PC-9 (cell line): ENCODE measurements at regions of chr12 and their contacts with region 1.

Region 1: GRCh38 chr12:75722714-75723200 is 211.3 kb upstream of the KRR1 start:
- DNase-seq: peak in 1 of 2 experiments; percentile 24
- H3K4me3 ChIP-seq: no peak overlapping the region
- H3K27ac ChIP-seq: no peak overlapping the region
- H3K4me1 ChIP-seq: peaks cover 13% of the 10 kb centered on the region
- H3K27me3 ChIP-seq: no peaks in the 10 kb centered on the region
- CTCF ChIP-seq: no peak

Region 2: GRCh38 chr12:75526655-75527511 is 195.9 kb before region 1 on chr12:
- CTCF ChIA-PET with region 1: no interaction called
- POLR2A ChIA-PET with region 1: no interaction called
- intact Hi-C with region 1: loop called (anchors 5 kb)
- DNase-seq: peak; percentile 3 to 40
- H3K4me3 ChIP-seq: no peak overlapping the region
- H3K27ac ChIP-seq: no peak overlapping the region
- H3K4me1 ChIP-seq: no peaks in the 10 kb centered on the region; the same call in 1 of the 2 replicates
- H3K27me3 ChIP-seq: no peaks in the 10 kb centered on the region
- CTCF ChIP-seq: peak; percentile 82

Region 3: GRCh38 chr12:75712252-75712651 is 10.5 kb before region 1 on chr12:
- CTCF ChIA-PET with region 1: no interaction called
- POLR2A ChIA-PET with region 1: no interaction called
- intact Hi-C with region 1: loop called (anchors 1 kb)
- DNase-seq: peak in 1 of 2 experiments; percentile 79
- H3K4me3 ChIP-seq: no peak overlapping the region
- H3K27ac ChIP-seq: peak overlapping the region; percentile 63
- H3K4me1 ChIP-seq: peaks cover 39% of the 10 kb centered on the region
- H3K27me3 ChIP-seq: no peaks in the 10 kb centered on the region
- CTCF ChIP-seq: no peak

Region 4: GRCh38 chr12:75814851-75815754 is 92.3 kb after region 1 on chr12:
- CTCF ChIA-PET with region 1: no interaction called
- POLR2A ChIA-PET with region 1: no interaction called
- intact Hi-C with region 1: loop called (anchors 5 kb)
- DNase-seq: peak; percentile 18 to 53
- H3K4me3 ChIP-seq: no peak overlapping the region
- H3K27ac ChIP-seq: no peak overlapping the region
- H3K4me1 ChIP-seq: peaks cover 10% of the 10 kb centered on the region
- H3K27me3 ChIP-seq: no peaks in the 10 kb centered on the region
- CTCF ChIP-seq: no peak

Region 5: GRCh38 chr12:75954041-75954440 is 231.3 kb after region 1 on chr12:
- CTCF ChIA-PET with region 1: no interaction called
- POLR2A ChIA-PET with region 1: no interaction called
- intact Hi-C with region 1: loop called (anchors 5 kb)
- DNase-seq: peak; percentile 57 to 99
- H3K4me3 ChIP-seq: peak overlapping the region; percentile 19; the same call in 1 of the 2 replicates
- H3K27ac ChIP-seq: peak overlapping the region; percentile 97
- H3K4me1 ChIP-seq: peaks cover 67% of the 10 kb centered on the region
- H3K27me3 ChIP-seq: no peaks in the 10 kb centered on the region
- CTCF ChIP-seq: no peak